ENCODE measurements at regions of chr5 and their contacts with region 1.

Region 1: DNA sequence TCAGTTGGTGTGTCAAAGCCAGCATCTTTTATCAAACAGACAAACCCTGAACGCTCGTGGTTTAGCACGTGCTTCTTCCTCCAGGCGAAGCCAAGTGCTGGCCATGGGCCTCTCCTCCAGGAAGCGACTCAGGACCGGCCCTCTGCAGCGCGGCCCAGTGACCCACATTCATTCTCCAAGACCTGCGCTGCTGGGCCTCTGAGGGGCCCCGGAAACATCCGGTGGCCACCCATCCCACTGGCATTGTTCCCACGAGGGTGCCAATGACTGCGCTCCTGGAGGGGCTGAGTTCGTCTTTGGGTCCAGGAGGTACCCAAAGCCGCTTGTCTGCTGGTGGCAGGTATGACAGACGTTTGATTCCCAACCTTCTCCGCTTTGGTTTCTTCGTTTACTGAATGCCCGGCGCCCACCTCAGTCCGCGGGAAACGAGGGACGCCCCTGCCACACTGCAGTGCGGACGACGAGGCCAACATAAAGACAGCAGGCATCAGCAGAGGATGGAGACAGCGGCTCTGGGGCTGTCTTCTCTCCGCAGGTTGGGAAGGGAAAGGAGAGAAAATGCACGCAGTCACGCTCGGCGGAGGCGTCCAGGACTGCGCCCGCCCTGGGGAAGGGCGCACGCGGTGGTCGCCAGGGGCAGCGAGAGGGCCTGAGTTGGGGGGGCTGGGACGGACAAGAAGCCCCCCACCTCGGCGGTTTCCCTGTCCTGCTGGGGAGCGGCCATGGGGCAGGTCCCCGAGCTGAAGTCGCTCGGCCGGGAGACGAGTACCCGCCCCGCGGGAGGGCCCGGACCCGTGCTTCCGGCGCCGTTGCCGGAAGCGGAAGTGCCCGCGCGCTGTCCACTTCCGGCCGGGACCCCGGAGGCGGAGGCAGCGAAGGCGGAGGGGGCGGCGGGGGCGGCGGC is at the start of gene EXOC3:
- DNase-seq: peak; percentile 63 to 69 (median 68)
- H3K4me3 ChIP-seq: peak within 1 kb of the TSS; percentile 84 to 92 (median 85)
- H3K4me3 Mint-ChIP-seq: peak within 1 kb of the TSS; percentile 92 to 94
- H3K27ac ChIP-seq: peak within 1 kb of the TSS; percentile 49 to 84
- H3K27ac Mint-ChIP-seq: peak within 1 kb of the TSS; percentile 85 to 93 (median 91)
- H3K4me1 ChIP-seq: peaks cover 43 to 44% of the 10 kb centered on the region in 2 donors
- H3K4me1 Mint-ChIP-seq: peaks cover 41% of the 10 kb centered on the region
- H3K27me3 ChIP-seq: no peaks in the 10 kb centered on the region
- H3K27me3 Mint-ChIP-seq: peaks cover 0 to 2% (median 0%) of the 10 kb centered on the region in 3 donors
- CTCF ChIP-seq: no peak
- polyA plus RNA-seq, gene EXOC3: 33.2 to 59.7 (median 53.8) TPM

Region 2: GRCh38 chr5:270340-270739 is 172.2 kb before region 1 on chr5:
- intact Hi-C with region 1: loop called (anchors 5 to 10 kb)
- DNase-seq: no peak
- H3K4me3 ChIP-seq: peak overlapping the region in 1 of 3 experiments; percentile 88
- H3K4me3 Mint-ChIP-seq: peak overlapping the region; percentile 94 to 99
- H3K27ac ChIP-seq: no peak overlapping the region
- H3K27ac Mint-ChIP-seq: peak overlapping the region in 4 of 7 donors; percentile 25 to 97 (median 75)
- H3K4me1 ChIP-seq: peaks cover 15% of the 10 kb centered on the region in 2 donors
- H3K4me1 Mint-ChIP-seq: peaks cover 16% of the 10 kb centered on the region
- H3K27me3 ChIP-seq: no peaks in the 10 kb centered on the region
- H3K27me3 Mint-ChIP-seq: peaks cover 0 to 2% (median 0%) of the 10 kb centered on the region in 3 donors
- CTCF ChIP-seq: no peak

Region 3: GRCh38 chr5:485946-486491 is 43.4 kb after region 1 on chr5:
- intact Hi-C with region 1: no loop called
- DNase-seq: peak; percentile 53 to 72 (median 57)
- H3K4me3 ChIP-seq: no peak overlapping the region
- H3K4me3 Mint-ChIP-seq: peak overlapping the region in 1 of 2 donors; percentile 48
- H3K27ac ChIP-seq: no peak overlapping the region
- H3K27ac Mint-ChIP-seq: peak overlapping the region in 6 of 7 donors; percentile 13 to 85 (median 35)
- H3K4me1 ChIP-seq: peaks cover 2 to 12% of the 10 kb centered on the region in 2 donors
- H3K4me1 Mint-ChIP-seq: peaks cover 14% of the 10 kb centered on the region
- H3K27me3 ChIP-seq: peaks cover 3 to 28% of the 10 kb centered on the region in 2 donors
- H3K27me3 Mint-ChIP-seq: peaks cover 10 to 45% (median 15%) of the 10 kb centered on the region in 3 donors
- CTCF ChIP-seq: no peak

Region 4: DNA sequence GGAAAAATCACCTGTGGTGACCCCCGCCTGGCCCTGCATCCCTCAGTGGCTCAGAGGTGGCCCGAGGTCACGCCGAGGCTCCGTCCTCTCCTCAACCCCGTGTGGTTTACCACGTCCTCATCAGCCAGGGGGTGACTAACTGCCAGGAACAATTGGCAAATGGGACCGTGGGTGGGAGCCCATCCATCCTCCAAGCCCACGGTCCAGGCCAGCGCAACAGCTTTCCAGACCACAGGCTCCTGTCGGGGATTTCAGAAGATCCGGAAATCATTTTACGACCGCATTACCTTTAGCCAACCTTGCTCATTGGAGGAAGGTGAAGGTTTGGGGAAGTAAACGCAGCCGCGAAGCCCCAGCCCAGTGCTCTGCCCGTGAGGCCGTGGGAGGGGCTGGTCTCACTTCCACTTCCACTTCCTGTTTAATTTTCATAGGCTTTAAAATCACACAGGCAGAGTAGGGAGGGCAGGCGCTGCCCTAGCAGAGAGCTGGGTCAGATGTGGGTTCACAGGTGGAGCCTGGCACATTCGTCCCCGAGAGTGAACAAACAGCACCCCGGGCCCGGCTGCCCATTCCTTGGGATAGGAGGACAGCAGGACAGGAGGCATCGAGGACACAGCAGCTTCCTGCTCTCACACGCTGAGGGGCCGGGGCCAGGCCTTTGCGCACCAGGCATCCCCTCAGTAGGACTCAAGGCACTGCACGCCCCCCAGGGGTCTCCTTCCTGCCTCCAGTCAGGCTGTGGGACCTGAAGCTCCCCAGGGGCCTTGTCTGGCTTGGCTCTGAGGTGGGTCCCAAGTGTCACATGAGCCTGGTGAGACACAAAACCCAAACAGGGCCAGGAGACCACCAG is 101.5 kb after region 1 on chr5:
- intact Hi-C with region 1: loop called in 1 of 2 experiments (anchors 10 kb)
- DNase-seq: peak; percentile 88 to 93 (median 92)
- H3K4me3 ChIP-seq: peak overlapping the region in 1 of 3 experiments; percentile 26
- H3K4me3 Mint-ChIP-seq: peak overlapping the region; percentile 37 to 63
- H3K27ac ChIP-seq: peak overlapping the region; percentile 15 to 27
- H3K27ac Mint-ChIP-seq: peak overlapping the region in 6 of 7 donors; percentile 67 to 87 (median 82)
- H3K4me1 ChIP-seq: peaks cover 19 to 25% of the 10 kb centered on the region in 2 donors
- H3K4me1 Mint-ChIP-seq: peaks cover 31% of the 10 kb centered on the region
- H3K27me3 ChIP-seq: peaks cover 1 to 79% of the 10 kb centered on the region in 2 donors
- H3K27me3 Mint-ChIP-seq: peaks cover 51 to 86% (median 65%) of the 10 kb centered on the region in 3 donors
- CTCF ChIP-seq: no peak

Region 5: GRCh38 chr5:902129-902916 is 459.7 kb after region 1 on chr5:
- intact Hi-C with region 1: loop called in 1 of 2 experiments (anchors 10 kb)
- DNase-seq: no peak
- H3K4me3 ChIP-seq: no peak overlapping the region
- H3K4me3 Mint-ChIP-seq: no peak overlapping the region
- H3K27ac ChIP-seq: no peak overlapping the region
- H3K27ac Mint-ChIP-seq: peak overlapping the region in 1 of 7 donors; percentile 13
- H3K4me1 ChIP-seq: no peaks in the 10 kb centered on the region
- H3K4me1 Mint-ChIP-seq: no peaks in the 10 kb centered on the region
- H3K27me3 ChIP-seq: no peaks in the 10 kb centered on the region
- H3K27me3 Mint-ChIP-seq: no peaks in the 10 kb centered on the region
- CTCF ChIP-seq: no peak

Measured in CD14-positive monocyte (primary cell).